HCT116 (cell line): ENCODE measurements at regions of chrX and their contacts with region 1.

Region 1: GRCh38 chrX:11724122-11725017 is 33.7 kb upstream of the MSL3 start:
- DNase-seq: peak; percentile 7
- ATAC-seq: no peak
- H3K4me3 ChIP-seq: no peak overlapping the region
- H3K27ac ChIP-seq: no peak overlapping the region
- H3K4me1 ChIP-seq: no peaks in the 10 kb centered on the region
- H3K27me3 ChIP-seq: no peaks in the 10 kb centered on the region
- CTCF ChIP-seq: peak; percentile 48 to 60 (median 54); a peak in 4 of 6 replicates
- POLR2A ChIP-seq: no peak
- RAD21 ChIP-seq: peak; percentile 38; the same call in 1 of the 2 replicates

Region 2: DNA sequence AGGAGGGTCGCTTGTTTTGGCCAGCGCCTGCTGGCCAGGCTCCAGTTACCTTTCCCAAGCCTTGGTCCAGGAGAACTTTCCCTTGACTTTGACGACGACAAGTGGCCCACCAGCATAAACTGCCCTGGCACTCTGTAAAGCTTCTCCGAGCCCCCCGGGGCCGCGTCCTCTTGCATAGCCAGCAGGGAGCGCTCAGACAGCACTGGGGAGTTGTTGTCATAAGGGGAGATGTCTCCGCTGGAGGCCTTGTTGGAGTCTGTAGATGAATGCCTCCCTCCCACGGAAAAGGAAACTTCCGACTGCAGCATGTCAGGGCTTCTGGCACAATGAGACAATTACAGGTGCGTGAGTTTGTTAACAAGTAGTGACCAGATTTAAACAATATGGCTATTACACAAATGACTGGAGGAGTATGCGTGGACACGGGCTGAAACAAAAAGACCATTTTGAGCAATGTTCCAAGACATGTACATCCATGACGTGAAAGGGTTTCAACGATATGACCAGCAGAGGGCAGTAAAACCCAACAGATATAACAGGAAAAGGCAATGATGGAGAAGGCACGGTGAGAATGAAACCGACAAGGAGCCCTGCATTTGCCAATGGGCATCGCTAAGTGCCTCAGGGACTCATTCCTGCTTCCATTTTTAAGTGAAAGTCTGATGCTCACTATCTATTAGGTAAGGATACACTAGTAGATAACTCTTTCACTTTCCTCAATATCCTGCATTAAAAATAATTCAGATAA is 580.3 kb before region 1 on chrX:
- CTCF ChIA-PET with region 1: no interaction called
- POLR2A ChIA-PET with region 1: no interaction called
- RAD21 ChIA-PET with region 1: no interaction called
- intact Hi-C with region 1: loop called (anchors 10 kb)
- DNase-seq: peak; percentile 63
- ATAC-seq: peak; percentile 86
- H3K4me3 ChIP-seq: no peak overlapping the region
- H3K27ac ChIP-seq: no peak overlapping the region
- H3K4me1 ChIP-seq: no peaks in the 10 kb centered on the region
- H3K27me3 ChIP-seq: no peaks in the 10 kb centered on the region
- CTCF ChIP-seq: peak; percentile 38 to 57 (median 52)
- POLR2A ChIP-seq: no peak
- RAD21 ChIP-seq: peak; percentile 66

Region 3: GRCh38 chrX:11688201-11688600 is 36.2 kb before region 1 on chrX:
- CTCF ChIA-PET with region 1: no interaction called
- POLR2A ChIA-PET with region 1: no interaction called
- RAD21 ChIA-PET with region 1: no interaction called
- intact Hi-C with region 1: no loop called
- DNase-seq: no peak
- ATAC-seq: no peak
- H3K4me3 ChIP-seq: no peak overlapping the region
- H3K27ac ChIP-seq: no peak overlapping the region
- H3K4me1 ChIP-seq: no peaks in the 10 kb centered on the region
- H3K27me3 ChIP-seq: no peaks in the 10 kb centered on the region
- CTCF ChIP-seq: no peak
- POLR2A ChIP-seq: no peak
- RAD21 ChIP-seq: no peak